MCF 10A (cell line): ENCODE measurements at regions of chr15 and their contacts with region 1.

Region 1: DNA sequence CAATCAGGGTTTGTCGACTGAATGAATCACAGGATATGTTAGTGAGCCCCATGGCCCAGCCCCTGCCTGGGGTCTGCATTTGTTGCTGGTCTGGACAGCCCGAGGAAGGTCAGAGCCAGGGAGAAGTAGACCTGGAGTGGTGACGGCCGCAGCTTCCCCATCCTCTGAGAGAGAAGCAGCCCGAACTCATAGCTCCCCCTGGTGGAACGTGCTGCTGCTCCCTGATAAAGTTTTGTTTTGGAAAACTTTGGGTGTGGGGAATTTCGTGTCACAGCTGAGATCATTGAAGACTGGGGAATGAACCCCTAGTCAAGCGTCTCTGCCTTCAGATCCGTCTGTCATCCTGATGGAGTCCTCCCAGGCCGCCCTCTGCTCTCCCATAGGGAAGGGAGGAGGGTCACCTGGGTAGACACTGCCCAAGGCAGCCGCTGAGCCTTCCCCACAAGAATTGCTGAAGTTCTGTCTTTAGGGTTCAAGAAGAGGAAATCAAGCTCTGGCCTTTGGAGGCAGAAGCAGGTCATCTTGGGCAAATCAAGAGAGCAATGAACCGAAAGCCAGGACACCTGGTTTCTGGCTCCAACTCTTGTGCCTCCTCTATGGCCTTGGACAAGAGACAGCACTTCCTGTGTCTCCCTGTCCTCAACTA is 60.5 kb downstream of the GLDN start:
- DNase-seq: peak; percentile 52
- H3K4me3 Mint-ChIP-seq: no peak overlapping the region
- H3K27ac Mint-ChIP-seq: no peak overlapping the region
- H3K4me1 Mint-ChIP-seq: peaks cover 6% of the 10 kb centered on the region
- H3K27me3 Mint-ChIP-seq: no peaks in the 10 kb centered on the region
- CTCF ChIP-seq: peak; percentile 42

Region 2: DNA sequence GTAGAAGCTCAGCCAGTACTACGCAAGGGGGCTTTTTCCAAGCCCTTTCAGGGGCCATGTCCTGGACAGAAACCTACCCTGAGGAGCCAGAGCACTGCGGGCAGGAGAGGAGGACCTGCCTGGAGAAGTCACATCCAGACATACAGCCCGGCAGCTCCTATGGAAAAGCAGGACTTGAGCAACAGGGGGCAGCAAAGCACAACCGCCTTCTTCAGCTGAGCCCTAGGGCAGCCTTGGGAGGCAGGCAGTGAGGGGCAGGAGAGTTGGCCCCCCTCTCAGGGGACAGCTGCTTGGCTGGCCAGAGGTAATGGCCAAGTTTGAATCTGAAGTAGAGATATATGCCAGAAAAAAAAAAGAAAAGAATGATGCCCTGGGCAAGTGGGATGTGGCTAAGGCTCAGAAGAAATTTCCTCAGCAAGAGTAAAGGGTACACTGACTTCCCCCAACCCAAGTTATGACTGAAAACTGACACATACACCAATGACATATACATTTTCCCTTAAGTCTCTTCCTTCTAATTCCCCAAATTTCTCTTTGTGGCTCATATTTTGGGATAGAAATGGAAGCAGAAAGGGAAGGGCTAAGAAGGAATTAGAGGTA is 120.5 kb before region 1 on chr15:
- CTCF ChIA-PET with region 1: interaction called, 10 read pairs
- POLR2A ChIA-PET with region 1: no interaction called
- intact Hi-C with region 1: no loop called
- DNase-seq: peak; percentile 69
- H3K4me3 Mint-ChIP-seq: no peak overlapping the region
- H3K27ac Mint-ChIP-seq: no peak overlapping the region
- H3K4me1 Mint-ChIP-seq: peaks cover 9% of the 10 kb centered on the region
- H3K27me3 Mint-ChIP-seq: peaks cover 17% of the 10 kb centered on the region
- CTCF ChIP-seq: peak; percentile 47

Region 3: GRCh38 chr15:51390241-51390965 is 11.6 kb before region 1 on chr15:
- CTCF ChIA-PET with region 1: interaction called, 23 read pairs
- POLR2A ChIA-PET with region 1: interaction called, 3 read pairs
- intact Hi-C with region 1: no loop called
- DNase-seq: no peak
- H3K4me3 Mint-ChIP-seq: no peak overlapping the region
- H3K27ac Mint-ChIP-seq: no peak overlapping the region
- H3K4me1 Mint-ChIP-seq: no peaks in the 10 kb centered on the region
- H3K27me3 Mint-ChIP-seq: no peaks in the 10 kb centered on the region
- CTCF ChIP-seq: no peak

Region 4: DNA sequence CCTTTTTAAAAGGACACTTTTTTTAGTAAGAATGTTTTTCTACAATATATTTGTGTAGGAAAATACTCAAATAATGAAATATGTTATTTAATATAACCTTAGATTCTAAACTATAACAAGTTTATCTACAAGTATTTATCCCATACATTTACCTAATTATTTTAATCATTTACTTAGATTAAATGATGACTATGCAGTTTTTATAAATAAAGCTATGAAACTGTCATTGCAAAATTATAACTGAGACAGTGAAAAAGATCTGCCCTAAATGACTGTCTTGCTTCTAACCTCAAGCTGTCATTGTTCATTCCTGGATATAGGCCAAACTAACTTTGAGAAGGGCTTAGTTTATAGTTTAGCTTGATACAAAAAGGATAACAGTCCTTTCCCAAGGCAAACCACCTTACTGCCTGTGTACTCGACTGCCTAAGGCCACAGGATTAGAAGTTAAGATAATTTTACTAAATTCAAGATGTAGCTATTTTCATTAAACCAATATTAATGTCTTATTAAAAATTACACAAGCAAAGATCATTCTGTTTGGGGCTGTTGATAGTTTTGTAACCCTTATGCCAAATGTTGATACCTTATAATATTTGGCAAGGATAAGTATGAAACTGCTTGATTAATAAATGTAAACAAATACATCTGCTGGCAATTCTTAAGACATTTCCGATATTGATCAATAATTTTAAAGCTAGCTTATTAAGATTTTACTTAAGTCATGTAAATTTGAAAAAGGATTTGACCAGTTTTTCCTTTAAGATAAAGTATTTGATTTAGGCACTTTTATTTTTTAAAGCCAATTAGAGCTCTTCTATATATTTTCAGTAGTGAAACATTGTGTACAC is 23.7 kb after region 1 on chr15:
- CTCF ChIA-PET with region 1: interaction called, 20 read pairs
- POLR2A ChIA-PET with region 1: no interaction called
- intact Hi-C with region 1: no loop called
- DNase-seq: peak; percentile 44
- H3K4me3 Mint-ChIP-seq: no peak overlapping the region
- H3K27ac Mint-ChIP-seq: no peak overlapping the region
- H3K4me1 Mint-ChIP-seq: no peaks in the 10 kb centered on the region
- H3K27me3 Mint-ChIP-seq: no peaks in the 10 kb centered on the region
- CTCF ChIP-seq: no peak

Region 5: DNA sequence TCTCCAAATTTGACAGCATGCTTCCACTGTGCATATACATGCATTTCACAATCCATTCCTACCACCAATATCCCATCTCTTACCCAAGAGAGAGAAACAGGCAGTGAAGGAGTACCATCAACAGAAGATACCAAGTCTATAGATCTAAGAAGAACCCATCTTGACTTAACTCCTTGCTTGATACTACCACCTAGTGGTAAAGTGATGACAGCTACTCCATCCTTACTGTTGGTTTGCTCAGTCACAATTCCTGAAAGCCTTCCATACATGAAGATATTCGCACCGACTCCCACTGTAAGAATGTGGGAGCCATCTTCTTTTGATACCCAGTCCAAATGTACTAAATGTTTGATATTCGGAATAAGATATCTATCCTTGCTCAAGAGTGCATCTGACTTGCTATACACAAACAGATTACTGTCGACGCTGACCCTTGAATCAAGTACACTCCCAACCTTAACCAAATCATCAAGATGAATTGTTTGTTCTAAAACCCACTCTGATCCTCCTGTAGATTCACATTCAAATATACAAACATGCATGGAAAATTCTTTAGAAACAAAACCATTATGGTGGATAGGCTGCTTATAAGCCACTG is 97.5 kb after region 1 on chr15:
- CTCF ChIA-PET with region 1: interaction called, 5 read pairs
- POLR2A ChIA-PET with region 1: no interaction called
- intact Hi-C with region 1: loop called (anchors 1 kb)
- DNase-seq: peak; percentile 54
- H3K4me3 Mint-ChIP-seq: no peak overlapping the region
- H3K27ac Mint-ChIP-seq: no peak overlapping the region
- H3K4me1 Mint-ChIP-seq: no peaks in the 10 kb centered on the region
- H3K27me3 Mint-ChIP-seq: no peaks in the 10 kb centered on the region
- CTCF ChIP-seq: peak; percentile 59